Endothelial cell of umbilical vein (primary cell): ENCODE measurements at regions of chr17 and their contacts with region 1.

Region 1: GRCh38 chr17:57987580-57988421 is at the start of gene VEZF1:
- DNase-seq: peak; percentile 49
- H3K4me3 ChIP-seq: peak within 1 kb of the TSS; percentile 81 to 89 (median 86)
- H3K27ac ChIP-seq: peak within 1 kb of the TSS; percentile 92
- H3K4me1 ChIP-seq: peaks cover 47% of the 10 kb centered on the region
- H3K27me3 ChIP-seq: no peaks in the 10 kb centered on the region
- CTCF ChIP-seq: no peak
- POLR2A ChIP-seq: no peak
- total RNA-seq, gene VEZF1: 58.2 and 59.0 TPM in 2 replicates

Region 2: GRCh38 chr17:57849874-57850754 is 137.7 kb before region 1 on chr17 and contains the start of gene MRPS23:
- CTCF ChIA-PET with region 1: interaction called, 584 read pairs
- POLR2A ChIA-PET with region 1: no interaction called
- dilution Hi-C with region 1: loop called (anchors 25 kb)
- intact Hi-C with region 1: loop called (anchors 1 kb)
- DNase-seq: peak; percentile 99
- H3K4me3 ChIP-seq: peak within 1 kb of the TSS; percentile 50 to 81 (median 52)
- H3K27ac ChIP-seq: peak within 1 kb of the TSS; percentile 66
- H3K4me1 ChIP-seq: peaks cover 14% of the 10 kb centered on the region
- H3K27me3 ChIP-seq: no peaks in the 10 kb centered on the region
- CTCF ChIP-seq: no peak
- POLR2A ChIP-seq: peak; percentile 80
- total RNA-seq, gene MRPS23: 40.7 and 46.2 TPM in 2 replicates

Region 3: GRCh38 chr17:57861000-57861789 is 126.6 kb before region 1 on chr17:
- CTCF ChIA-PET with region 1: interaction called, 584 read pairs
- POLR2A ChIA-PET with region 1: interaction called, 3 read pairs
- dilution Hi-C with region 1: loop called (anchors 25 kb)
- intact Hi-C with region 1: loop called (anchors 1 kb)
- DNase-seq: peak; percentile 30
- H3K4me3 ChIP-seq: peak overlapping the region; percentile 21 to 49 (median 31)
- H3K27ac ChIP-seq: no peak overlapping the region
- H3K4me1 ChIP-seq: peaks cover 17% of the 10 kb centered on the region
- H3K27me3 ChIP-seq: no peaks in the 10 kb centered on the region
- CTCF ChIP-seq: no peak
- POLR2A ChIP-seq: no peak

Region 4: GRCh38 chr17:57970706-57971105 is 17.1 kb before region 1 on chr17:
- CTCF ChIA-PET with region 1: interaction called, 6 read pairs
- POLR2A ChIA-PET with region 1: no interaction called
- dilution Hi-C with region 1: no loop called
- intact Hi-C with region 1: loop called (anchors 2 kb)
- DNase-seq: peak; percentile 26
- H3K4me3 ChIP-seq: no peak overlapping the region
- H3K27ac ChIP-seq: peak overlapping the region; percentile 1
- H3K4me1 ChIP-seq: peaks cover 6% of the 10 kb centered on the region
- H3K27me3 ChIP-seq: no peaks in the 10 kb centered on the region
- CTCF ChIP-seq: no peak
- POLR2A ChIP-seq: no peak

Region 5: GRCh38 chr17:58006924-58007780 is 19.4 kb after region 1 on chr17 and contains the start of gene SRSF1:
- CTCF ChIA-PET with region 1: no interaction called
- POLR2A ChIA-PET with region 1: interaction called, 13 read pairs
- dilution Hi-C with region 1: no loop called
- intact Hi-C with region 1: no loop called
- DNase-seq: peak; percentile 98
- H3K4me3 ChIP-seq: peak within 1 kb of the TSS; percentile 39 to 95 (median 85)
- H3K27ac ChIP-seq: peak within 1 kb of the TSS; percentile 67
- H3K4me1 ChIP-seq: peaks cover 36% of the 10 kb centered on the region
- H3K27me3 ChIP-seq: no peaks in the 10 kb centered on the region
- CTCF ChIP-seq: no peak
- POLR2A ChIP-seq: peak; percentile 97
- total RNA-seq, gene SRSF1: 309 and 316 TPM in 2 replicates